ENCODE measurements at regions of chr12 and their contacts with region 1.

Region 1: GRCh38 chr12:93502802-93503623 is 35.7 kb downstream of the MRPL42 start:
- DNase-seq: no peak
- H3K4me3 ChIP-seq: no peak overlapping the region
- H3K27ac ChIP-seq: no peak overlapping the region
- H3K4me1 ChIP-seq: no peaks in the 10 kb centered on the region
- H3K27me3 ChIP-seq: no peaks in the 10 kb centered on the region
- CTCF ChIP-seq: peak; percentile 63 to 83 (median 77)
- EP300 ChIP-seq: no peak
- POLR2A ChIP-seq: no peak

Region 2: GRCh38 chr12:93677195-93678064 is 174.4 kb after region 1 on chr12 and contains the start of gene CRADD:
- intact Hi-C with region 1: loop called (anchors 10 kb)
- DNase-seq: peak; percentile 95
- H3K4me3 ChIP-seq: peak within 1 kb of the TSS; percentile 67 to 84 (median 75)
- H3K27ac ChIP-seq: peak within 1 kb of the TSS; percentile 93 to 97 (median 95)
- H3K4me1 ChIP-seq: peaks cover 19 to 40% (median 29%) of the 10 kb centered on the region in 4 donors
- H3K27me3 ChIP-seq: no peaks in the 10 kb centered on the region
- CTCF ChIP-seq: peak in 1 of 3 experiments; percentile 19
- EP300 ChIP-seq: no peak
- POLR2A ChIP-seq: no peak
- total RNA-seq, gene CRADD: 23.5 to 35.3 (median 26.1) TPM

Region 3: GRCh38 chr12:93766796-93767523 is 263.9 kb after region 1 on chr12:
- intact Hi-C with region 1: loop called (anchors 10 kb)
- DNase-seq: no peak
- H3K4me3 ChIP-seq: no peak overlapping the region
- H3K27ac ChIP-seq: peak overlapping the region; percentile 45 to 62 (median 53)
- H3K4me1 ChIP-seq: peaks cover 20 to 34% (median 26%) of the 10 kb centered on the region in 4 donors
- H3K27me3 ChIP-seq: no peaks in the 10 kb centered on the region
- CTCF ChIP-seq: peak; percentile 56 to 72 (median 67)
- EP300 ChIP-seq: no peak
- POLR2A ChIP-seq: no peak

Region 4: DNA sequence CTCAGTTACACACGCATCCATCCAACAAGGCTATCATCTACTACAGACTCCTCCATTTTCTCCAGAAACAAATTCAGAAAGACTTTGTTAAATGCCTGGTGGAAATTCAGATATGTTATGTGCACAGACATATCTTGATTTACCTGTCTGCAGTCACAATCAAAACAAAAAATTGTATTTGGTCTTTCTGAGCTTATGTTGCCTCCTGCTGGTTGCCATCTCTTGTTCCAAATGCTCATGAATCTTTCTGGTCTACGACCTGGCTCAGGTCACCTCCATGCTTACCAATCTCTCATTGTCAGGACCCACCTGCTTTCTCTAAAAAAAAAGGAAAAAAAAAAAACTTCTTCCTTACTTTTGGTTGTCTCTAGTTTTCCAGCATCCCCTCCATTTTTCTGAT is 476.2 kb after region 1 on chr12:
- intact Hi-C with region 1: loop called (anchors 5 kb)
- DNase-seq: no peak
- H3K4me3 ChIP-seq: no peak overlapping the region
- H3K27ac ChIP-seq: no peak overlapping the region
- H3K4me1 ChIP-seq: peaks cover 0 to 11% (median 7%) of the 10 kb centered on the region in 4 donors
- H3K27me3 ChIP-seq: no peaks in the 10 kb centered on the region
- CTCF ChIP-seq: peak; percentile 48 to 56 (median 56)
- EP300 ChIP-seq: no peak
- POLR2A ChIP-seq: no peak

Region 5: DNA sequence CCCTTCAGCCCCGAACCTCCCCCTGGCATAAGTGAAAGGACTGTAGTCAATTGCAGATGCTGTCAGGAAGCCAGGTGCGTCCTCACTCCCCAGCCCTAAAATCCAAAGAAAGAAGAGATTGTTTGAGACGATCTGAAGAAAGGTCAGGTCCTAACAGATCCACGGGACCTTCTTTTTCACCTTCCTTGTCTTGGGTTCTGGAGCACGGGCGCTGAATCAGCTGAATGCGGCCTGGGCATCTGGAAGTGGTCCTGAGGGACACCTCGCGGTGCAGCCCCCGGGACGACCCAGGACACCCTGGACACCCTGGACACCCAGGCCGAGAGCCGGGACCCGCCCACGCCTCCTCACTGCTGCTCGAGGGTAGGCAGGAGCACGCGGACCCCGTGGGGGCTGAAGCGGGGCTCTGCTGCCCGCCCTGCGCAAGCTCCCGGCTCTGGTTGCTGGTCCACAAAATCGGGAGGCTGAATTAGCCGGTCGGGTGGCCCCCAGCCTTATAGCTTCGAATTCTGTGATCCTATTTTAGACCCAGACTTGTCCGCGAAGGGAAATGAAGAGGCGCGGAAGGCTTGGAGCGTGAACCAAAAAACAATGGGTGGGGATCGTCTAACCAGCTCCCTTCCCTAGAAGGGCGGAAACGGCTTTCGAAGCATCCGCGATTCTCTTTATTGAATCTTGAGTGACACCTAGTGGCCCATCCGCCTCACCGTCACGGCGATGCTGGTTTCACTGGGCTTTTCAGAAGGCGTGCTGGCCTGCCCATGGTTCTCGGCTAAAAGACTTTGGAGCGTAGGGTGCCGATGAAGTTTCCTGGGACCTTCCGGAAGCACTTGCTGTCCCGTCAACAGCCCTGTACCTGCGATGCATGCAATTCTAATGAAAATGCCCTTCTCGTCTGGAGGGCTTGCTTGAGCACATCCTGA is 599.0 kb after region 1 on chr12:
- intact Hi-C with region 1: loop called (anchors 2 kb)
- DNase-seq: peak; percentile 98
- H3K4me3 ChIP-seq: peak overlapping the region; percentile 58 to 82 (median 64)
- H3K27ac ChIP-seq: peak overlapping the region; percentile 22 to 60 (median 56)
- H3K4me1 ChIP-seq: peaks cover 13 to 17% (median 15%) of the 10 kb centered on the region in 4 donors
- H3K27me3 ChIP-seq: peaks cover 0 to 15% (median 0%) of the 10 kb centered on the region in 4 donors
- CTCF ChIP-seq: peak; percentile 83 to 88 (median 87)
- EP300 ChIP-seq: no peak
- POLR2A ChIP-seq: no peak